AG04449 (cell line): ENCODE measurements at regions of chr4 and their contacts with region 1.

Region 1: GRCh38 chr4:145061318-145061920 is 36.6 kb downstream of the ANAPC10 start:
- DNase-seq: no peak
- H3K4me3 ChIP-seq: no peak overlapping the region
- CTCF ChIP-seq: peak; percentile 6

Region 2: GRCh38 chr4:144171697-144172096 is 889.7 kb before region 1 on chr4:
- CTCF ChIA-PET with region 1: interaction called, 11 read pairs
- POLR2A ChIA-PET with region 1: no interaction called
- DNase-seq: no peak
- H3K4me3 ChIP-seq: no peak overlapping the region
- CTCF ChIP-seq: no peak

Region 3: DNA sequence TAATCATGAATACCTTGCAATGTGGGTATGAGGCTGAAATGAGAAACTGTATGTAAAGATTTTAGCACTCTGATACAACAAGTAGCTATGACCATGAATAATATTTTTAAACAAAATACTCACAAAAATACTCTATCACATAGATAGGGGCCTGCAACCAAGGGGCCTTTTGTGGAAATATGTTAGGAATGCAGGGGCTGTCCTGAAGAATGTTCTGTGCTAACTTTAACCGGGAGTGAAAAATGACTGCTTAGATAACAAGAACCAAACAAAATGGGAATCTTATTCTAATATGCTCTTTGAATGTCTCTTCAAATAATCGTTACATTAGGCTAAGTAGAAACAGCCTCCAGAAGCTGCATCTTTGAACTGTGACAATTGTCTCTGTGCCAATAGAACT is 883.0 kb before region 1 on chr4:
- CTCF ChIA-PET with region 1: interaction called, 19 read pairs
- POLR2A ChIA-PET with region 1: no interaction called
- DNase-seq: no peak
- H3K4me3 ChIP-seq: no peak overlapping the region
- CTCF ChIP-seq: no peak

Region 4: DNA sequence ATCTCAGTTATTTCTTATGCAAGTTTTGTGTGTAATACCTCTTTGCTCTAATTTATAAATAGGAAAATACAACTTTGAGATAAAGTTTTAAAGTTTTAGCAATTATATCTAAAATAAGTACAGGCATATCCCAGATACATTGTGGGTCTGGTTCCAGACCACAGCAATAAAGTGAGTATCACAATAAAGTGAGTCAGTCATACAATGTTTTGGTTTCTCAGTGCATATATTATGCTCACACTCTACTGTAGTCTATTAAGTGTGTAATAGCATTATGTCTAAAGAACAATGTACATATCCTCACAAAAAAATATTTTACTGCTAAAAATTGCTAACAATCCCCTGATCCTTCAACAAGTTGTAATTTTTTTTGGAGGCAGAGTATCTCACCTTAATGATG is 12.6 kb before region 1 on chr4:
- CTCF ChIA-PET with region 1: interaction called, 16 read pairs
- POLR2A ChIA-PET with region 1: no interaction called
- DNase-seq: no peak
- H3K4me3 ChIP-seq: no peak overlapping the region
- CTCF ChIP-seq: no peak

Region 5: DNA sequence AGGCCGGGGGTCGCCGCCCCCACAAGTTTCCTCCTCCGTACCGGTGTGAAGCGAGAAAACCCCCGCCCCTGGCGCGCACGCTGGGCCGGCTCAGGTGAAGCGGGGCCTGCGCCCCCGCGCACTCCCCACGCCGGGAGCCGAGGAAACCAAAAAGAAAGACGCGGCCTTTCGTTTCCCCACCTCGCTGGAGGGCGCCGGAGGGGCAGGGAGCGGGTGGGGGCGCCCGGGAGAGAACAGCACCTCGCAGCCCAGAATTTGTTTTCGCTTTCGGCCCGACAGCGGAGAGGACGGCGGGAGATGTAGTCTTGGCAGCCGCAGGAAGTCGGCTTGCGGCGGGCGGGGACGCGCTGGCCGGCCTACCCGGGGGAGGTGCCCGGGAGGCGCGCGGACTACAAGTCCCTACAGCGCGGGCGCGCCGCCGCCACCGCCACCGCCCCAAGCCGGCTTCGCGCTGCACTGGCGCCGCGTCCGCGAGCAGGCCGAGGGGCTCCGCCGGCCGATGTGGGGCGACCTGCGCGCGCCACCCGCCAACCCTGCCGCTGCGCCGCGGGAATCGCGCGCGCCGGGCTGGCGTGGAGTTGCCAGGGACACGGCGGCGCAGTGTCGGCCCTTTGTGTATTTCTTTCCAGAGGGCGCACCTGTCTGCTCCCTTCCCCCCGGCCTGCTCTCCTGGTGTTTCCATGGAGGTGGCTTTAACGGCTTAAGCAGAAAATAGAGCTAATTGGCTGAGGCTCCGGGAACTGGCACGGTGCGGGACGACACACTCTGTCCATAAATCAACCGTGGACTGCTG is 119.1 kb after region 1 on chr4 and contains the start of gene OTUD4:
- CTCF ChIA-PET with region 1: no interaction called
- POLR2A ChIA-PET with region 1: no interaction called
- DNase-seq: peak; percentile 54
- H3K4me3 ChIP-seq: peak within 1 kb of the TSS; percentile 77
- CTCF ChIP-seq: peak; percentile 34

Region 6: GRCh38 chr4:145609481-145610427 is 548.3 kb after region 1 on chr4:
- CTCF ChIA-PET with region 1: no interaction called
- POLR2A ChIA-PET with region 1: no interaction called
- DNase-seq: no peak
- H3K4me3 ChIP-seq: no peak overlapping the region
- CTCF ChIP-seq: peak; percentile 70